Heart left ventricle (tissue), 16 donors: ENCODE measurements at regions of chr6 and their contacts with region 1.

Region 1: GRCh38 chr6:96171112-96171511 is 155.3 kb downstream of the FUT9 start:
- DNase-seq: no peak
- ATAC-seq: no peak
- H3K4me3 ChIP-seq: no peak overlapping the region
- H3K27ac ChIP-seq: no peak overlapping the region
- H3K4me1 ChIP-seq: no peaks in the 10 kb centered on the region
- H3K27me3 ChIP-seq: no peaks in the 10 kb centered on the region
- CTCF ChIP-seq: no peak
- POLR2A ChIP-seq: no peak

Region 2: DNA sequence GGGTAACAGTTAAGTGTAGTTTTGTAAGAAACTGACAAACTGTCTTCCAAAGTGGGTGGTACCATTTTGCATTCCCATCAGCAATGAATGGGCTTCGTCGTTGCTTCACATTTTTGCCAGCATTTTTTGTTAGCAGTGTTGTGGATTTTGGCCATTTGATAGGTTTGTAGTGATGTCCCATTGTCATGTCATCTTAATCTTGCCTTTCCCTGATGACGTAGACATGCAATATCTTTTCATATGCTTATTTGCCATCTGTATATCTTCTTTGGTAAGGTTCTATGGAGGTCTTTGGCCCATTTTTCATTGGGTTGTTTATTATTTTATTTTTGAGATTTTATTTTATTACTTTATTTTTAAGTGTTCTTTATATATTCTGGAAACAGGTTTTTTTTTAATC is 781.0 kb before region 1 on chr6:
- intact Hi-C with region 1: loop called in 1 of 10 experiments (anchors 5 kb)
- DNase-seq: no peak
- ATAC-seq: no peak
- H3K4me3 ChIP-seq: no peak overlapping the region
- H3K27ac ChIP-seq: no peak overlapping the region
- H3K4me1 ChIP-seq: no peaks in the 10 kb centered on the region
- H3K27me3 ChIP-seq: no peaks in the 10 kb centered on the region
- CTCF ChIP-seq: no peak
- POLR2A ChIP-seq: no peak